Transverse colon (tissue), 4 donors: ENCODE measurements at regions of chr18 and their contacts with region 1.

Region 1: GRCh38 chr18:9184998-9185613 is 48.5 kb downstream of the ANKRD12 start:
- DNase-seq: no peak
- H3K4me3 ChIP-seq: no peak overlapping the region
- H3K27ac ChIP-seq: no peak overlapping the region
- H3K4me1 ChIP-seq: peaks cover 0 to 32% (median 5%) of the 10 kb centered on the region in 4 donors
- H3K27me3 ChIP-seq: no peaks in the 10 kb centered on the region
- CTCF ChIP-seq: no peak
- EP300 ChIP-seq: no peak
- POLR2A ChIP-seq: no peak

Region 2: GRCh38 chr18:8654503-8655451 is 530.3 kb before region 1 on chr18:
- in situ Hi-C with region 1: loop called in 1 of 4 experiments (anchors 25 kb)
- intact Hi-C with region 1: no loop called
- DNase-seq: no peak
- H3K4me3 ChIP-seq: no peak overlapping the region
- H3K27ac ChIP-seq: no peak overlapping the region
- H3K4me1 ChIP-seq: no peaks in the 10 kb centered on the region
- H3K27me3 ChIP-seq: no peaks in the 10 kb centered on the region
- CTCF ChIP-seq: peak; percentile 72 to 88 (median 80)
- EP300 ChIP-seq: no peak
- POLR2A ChIP-seq: no peak